CD4-positive, alpha-beta memory T cell (primary cell): ENCODE measurements at regions of chr5 and their contacts with region 1.

Region 1: DNA sequence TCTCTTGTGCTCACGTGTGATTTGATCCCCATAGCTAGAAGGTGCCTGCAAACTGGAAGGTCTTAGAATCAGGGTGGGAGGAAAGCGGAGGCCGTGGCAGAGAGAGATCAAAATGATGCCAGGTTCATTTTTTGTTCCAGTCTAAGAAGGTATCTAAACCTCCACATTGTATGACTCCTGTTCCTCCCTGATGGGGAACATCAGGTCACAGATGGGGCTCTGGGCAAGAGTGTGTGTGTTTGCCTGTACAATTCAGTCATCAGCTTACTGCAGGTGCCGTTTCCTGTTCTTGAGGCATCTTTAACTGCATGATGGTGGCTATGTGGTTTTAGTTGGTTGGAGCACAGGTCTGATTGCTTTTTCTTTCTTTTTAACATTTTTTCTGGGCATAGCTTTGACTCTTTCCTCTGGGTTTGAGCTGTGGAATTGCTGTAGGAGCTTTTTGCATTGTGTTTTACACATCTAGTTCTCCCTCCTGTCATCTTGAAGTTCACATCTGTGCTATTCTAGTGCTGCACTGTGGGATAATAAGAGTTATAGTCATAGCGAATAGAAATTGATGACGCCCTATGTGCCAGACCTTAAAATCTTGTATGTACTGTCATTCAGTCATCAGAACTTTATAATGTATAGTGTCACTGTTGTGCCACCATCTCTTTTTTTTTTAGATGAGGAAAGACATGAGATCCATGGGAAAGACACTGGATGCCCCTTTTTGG is 30.8 kb downstream of the ARHGAP26 start:
- DNase-seq: peak; percentile 47 to 58 (median 54)
- H3K4me3 ChIP-seq: no peak overlapping the region
- H3K4me3 Mint-ChIP-seq: peak overlapping the region; percentile 27 to 83 (median 74)
- H3K27ac ChIP-seq: peak overlapping the region; percentile 6
- H3K27ac Mint-ChIP-seq: peak overlapping the region; percentile 71 to 96 (median 93)
- H3K4me1 ChIP-seq: peaks cover 51% of the 10 kb centered on the region
- H3K4me1 Mint-ChIP-seq: peaks cover 36 to 64% (median 50%) of the 10 kb centered on the region in 4 donors
- H3K27me3 ChIP-seq: no peaks in the 10 kb centered on the region
- H3K27me3 Mint-ChIP-seq: no peaks in the 10 kb centered on the region

Region 2: GRCh38 chr5:142783601-142784341 is 17.2 kb before region 1 on chr5:
- CTCF ChIA-PET with region 1: interaction called, 5 read pairs
- POLR2A ChIA-PET with region 1: interaction called, 43 read pairs
- intact Hi-C with region 1: no loop called
- DNase-seq: peak in 2 of 5 donors; percentile 17 to 43
- H3K4me3 ChIP-seq: peak overlapping the region in 1 of 2 donors; percentile 31
- H3K4me3 Mint-ChIP-seq: peak overlapping the region in 7 of 8 donors; percentile 70 to 90 (median 78)
- H3K27ac ChIP-seq: no peak overlapping the region
- H3K27ac Mint-ChIP-seq: peak overlapping the region in 5 of 7 donors; percentile 43 to 77 (median 70)
- H3K4me1 ChIP-seq: peaks cover 28% of the 10 kb centered on the region
- H3K4me1 Mint-ChIP-seq: peaks cover 29 to 68% (median 50%) of the 10 kb centered on the region in 4 donors
- H3K27me3 ChIP-seq: no peaks in the 10 kb centered on the region
- H3K27me3 Mint-ChIP-seq: no peaks in the 10 kb centered on the region

Region 3: GRCh38 chr5:142881076-142881783 is 80.3 kb after region 1 on chr5:
- CTCF ChIA-PET with region 1: interaction called, 11 read pairs
- POLR2A ChIA-PET with region 1: no interaction called
- intact Hi-C with region 1: no loop called
- DNase-seq: no peak
- H3K4me3 ChIP-seq: no peak overlapping the region
- H3K4me3 Mint-ChIP-seq: no peak overlapping the region
- H3K27ac ChIP-seq: no peak overlapping the region
- H3K27ac Mint-ChIP-seq: peak overlapping the region in 1 of 7 donors; percentile 25
- H3K4me1 ChIP-seq: no peaks in the 10 kb centered on the region
- H3K4me1 Mint-ChIP-seq: peaks cover 0 to 3% (median 1%) of the 10 kb centered on the region in 4 donors
- H3K27me3 ChIP-seq: no peaks in the 10 kb centered on the region
- H3K27me3 Mint-ChIP-seq: no peaks in the 10 kb centered on the region